Activated CD4-positive, alpha-beta T cell treated with anti-CD3 and anti-CD28 coated beads for 36 hours (primary cell): ENCODE measurements at regions of chr3 and their contacts with region 1.

Region 1: DNA sequence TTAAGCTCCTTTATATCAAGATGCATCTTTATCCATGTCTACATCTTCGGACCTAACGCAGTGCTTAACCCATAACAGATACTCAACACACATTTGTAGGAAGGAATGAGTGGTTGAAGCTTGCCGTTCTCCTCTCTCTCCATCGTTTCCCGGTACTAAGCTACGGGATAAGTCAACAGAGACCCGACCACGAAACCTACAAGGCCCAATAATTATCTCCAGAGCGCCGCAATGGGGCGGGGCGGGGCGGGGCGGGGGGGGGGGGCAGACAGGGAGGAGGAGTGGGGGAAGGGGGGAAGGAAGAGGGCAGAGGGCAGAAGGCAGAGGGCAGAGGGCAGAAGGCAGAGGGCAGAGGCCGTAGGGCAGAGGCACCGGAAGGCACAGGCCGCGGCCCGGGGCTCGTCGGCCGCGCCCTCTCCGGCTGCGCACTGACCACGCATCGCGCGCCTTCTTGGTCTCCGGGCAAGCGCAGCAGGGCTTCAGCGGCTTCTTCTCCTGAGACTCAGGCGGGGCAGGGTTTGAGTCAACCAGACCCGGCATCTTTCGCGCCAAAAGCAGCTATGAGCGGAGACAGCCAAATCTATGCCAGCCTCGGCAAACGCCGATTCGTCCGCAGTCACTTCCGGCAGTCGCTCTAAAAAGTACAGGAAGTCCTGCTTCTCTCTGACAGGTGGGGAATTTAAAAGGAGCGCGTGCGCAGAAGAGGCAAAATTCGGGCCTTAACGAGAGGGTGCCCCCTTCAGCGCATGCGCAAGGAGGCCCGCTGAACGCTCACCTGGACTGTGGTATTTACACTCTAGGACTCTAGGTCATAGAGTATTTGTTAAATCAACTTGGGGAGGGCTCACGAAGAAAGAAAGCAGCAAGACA is at the start of gene COX17:
- DNase-seq: peak; percentile 97
- ATAC-seq: peak; percentile 91
- H3K4me3 Mint-ChIP-seq: peak within 1 kb of the TSS; percentile 95
- H3K27ac Mint-ChIP-seq: peak within 1 kb of the TSS; percentile 97
- H3K4me1 Mint-ChIP-seq: peaks cover 36% of the 10 kb centered on the region
- H3K27me3 Mint-ChIP-seq: no peaks in the 10 kb centered on the region
- total RNA-seq, gene COX17: 69.5 to 82.8 TPM

Region 2: DNA sequence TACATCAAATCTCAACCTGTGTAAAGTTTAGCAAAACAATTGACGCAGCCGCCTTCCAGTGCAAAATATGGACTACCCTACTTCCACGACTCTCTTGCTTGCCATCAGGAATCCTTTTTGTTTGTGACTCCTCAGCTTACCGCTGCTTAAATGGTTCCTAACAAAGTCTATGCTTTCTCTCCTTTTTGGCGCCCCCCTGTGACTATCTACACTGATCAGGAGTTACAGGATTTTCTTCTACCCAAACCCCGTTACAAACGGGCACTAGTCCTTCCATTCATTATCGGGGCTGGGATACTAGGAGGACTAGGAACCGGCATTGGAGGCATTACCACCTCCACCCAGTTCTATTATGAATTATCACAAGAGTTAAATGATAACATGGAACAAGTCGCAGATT is 826.3 kb before region 1 on chr3:
- CTCF ChIA-PET with region 1: no interaction called
- POLR2A ChIA-PET with region 1: no interaction called
- intact Hi-C with region 1: no loop called
- DNase-seq: no peak
- ATAC-seq: no peak
- H3K4me3 Mint-ChIP-seq: no peak overlapping the region
- H3K27ac Mint-ChIP-seq: no peak overlapping the region
- H3K4me1 Mint-ChIP-seq: peaks cover 11% of the 10 kb centered on the region
- H3K27me3 Mint-ChIP-seq: peaks cover 6% of the 10 kb centered on the region

Region 3: GRCh38 chr3:118884748-118885206 is 792.2 kb before region 1 on chr3:
- CTCF ChIA-PET with region 1: interaction called, 7 read pairs
- POLR2A ChIA-PET with region 1: no interaction called
- intact Hi-C with region 1: loop called (anchors 1 to 10 kb)
- DNase-seq: peak; percentile 89
- ATAC-seq: peak; percentile 89
- H3K4me3 Mint-ChIP-seq: no peak overlapping the region
- H3K27ac Mint-ChIP-seq: no peak overlapping the region
- H3K4me1 Mint-ChIP-seq: peaks cover 3% of the 10 kb centered on the region
- H3K27me3 Mint-ChIP-seq: peaks cover 17% of the 10 kb centered on the region

Region 4: GRCh38 chr3:119279101-119279554 is 397.9 kb before region 1 on chr3:
- CTCF ChIA-PET with region 1: no interaction called
- POLR2A ChIA-PET with region 1: no interaction called
- intact Hi-C with region 1: loop called (anchors 1 to 10 kb)
- DNase-seq: no peak
- ATAC-seq: no peak
- H3K4me3 Mint-ChIP-seq: no peak overlapping the region
- H3K27ac Mint-ChIP-seq: no peak overlapping the region
- H3K4me1 Mint-ChIP-seq: peaks cover 14% of the 10 kb centered on the region
- H3K27me3 Mint-ChIP-seq: no peaks in the 10 kb centered on the region

Region 5: DNA sequence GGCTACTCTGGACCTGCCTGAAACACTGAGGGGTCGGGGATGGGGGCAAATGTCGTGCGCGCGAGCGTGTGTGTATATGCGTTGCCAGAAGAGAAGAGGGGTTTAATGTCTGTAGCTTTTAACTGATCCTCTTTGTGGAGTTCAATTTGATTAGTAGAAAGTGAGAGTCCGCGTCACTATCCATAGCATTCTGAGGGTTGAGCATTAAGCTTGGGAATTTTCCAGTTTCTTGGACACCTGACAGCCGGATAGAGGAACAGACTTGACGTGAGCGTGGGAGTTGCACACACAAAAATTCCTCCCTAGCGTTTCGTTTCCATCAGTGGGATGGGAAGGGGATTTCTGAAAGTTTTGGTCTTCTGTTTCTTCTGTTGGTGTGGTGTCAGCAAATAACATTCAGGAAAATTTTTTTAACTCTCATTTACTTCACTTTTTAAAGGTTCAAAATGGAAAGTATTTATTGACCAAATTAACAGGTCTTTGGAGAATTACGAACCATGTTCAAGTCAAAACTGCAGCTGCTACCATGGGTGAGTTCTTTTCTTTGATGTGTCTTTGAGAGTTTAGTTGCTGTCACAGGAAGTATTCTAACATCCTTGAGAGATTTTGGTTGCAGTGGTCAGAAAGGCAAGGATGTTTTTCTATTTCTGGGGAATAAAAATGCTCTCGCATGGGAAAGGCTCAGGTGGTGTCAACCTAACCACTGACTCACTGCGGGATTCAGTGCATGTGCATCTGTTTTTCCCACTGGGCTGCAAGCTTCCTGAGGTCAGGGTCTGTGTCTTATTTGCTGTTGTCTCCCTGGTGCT is 207.4 kb before region 1 on chr3:
- CTCF ChIA-PET with region 1: interaction called, 5 read pairs
- POLR2A ChIA-PET with region 1: interaction called, 10 read pairs
- intact Hi-C with region 1: loop called (anchors 1 kb)
- DNase-seq: no peak
- ATAC-seq: peak; percentile 47
- H3K4me3 Mint-ChIP-seq: peak overlapping the region; percentile 83
- H3K27ac Mint-ChIP-seq: peak overlapping the region; percentile 90
- H3K4me1 Mint-ChIP-seq: peaks cover 35% of the 10 kb centered on the region
- H3K27me3 Mint-ChIP-seq: no peaks in the 10 kb centered on the region

Region 6: GRCh38 chr3:119600732-119601131 is 76.3 kb before region 1 on chr3:
- CTCF ChIA-PET with region 1: interaction called, 4 read pairs
- POLR2A ChIA-PET with region 1: no interaction called
- intact Hi-C with region 1: loop called in 1 of 2 experiments (anchors 2 kb)
- DNase-seq: peak; percentile 65
- ATAC-seq: peak; percentile 80
- H3K4me3 Mint-ChIP-seq: no peak overlapping the region
- H3K27ac Mint-ChIP-seq: no peak overlapping the region
- H3K4me1 Mint-ChIP-seq: peaks cover 8% of the 10 kb centered on the region
- H3K27me3 Mint-ChIP-seq: no peaks in the 10 kb centered on the region

Region 7: DNA sequence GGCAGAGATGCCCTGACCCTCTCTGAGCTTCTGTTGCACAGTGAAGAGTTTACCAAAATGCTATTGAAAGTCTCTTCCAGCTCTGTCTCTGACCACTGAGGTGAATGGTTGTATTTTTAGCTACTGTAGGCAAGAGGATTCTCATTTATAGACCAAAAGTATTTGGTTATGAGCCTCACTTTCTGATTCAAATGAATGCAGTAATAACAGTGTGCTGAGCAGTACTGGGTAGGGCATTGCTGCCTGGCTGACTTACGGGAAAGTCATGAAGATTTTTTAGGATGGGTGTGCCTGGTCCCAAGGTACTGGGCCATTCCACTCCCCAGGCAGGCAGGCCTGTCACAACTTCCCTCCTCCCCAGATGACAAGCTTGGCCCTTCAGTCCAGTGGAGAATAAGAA is 63.8 kb before region 1 on chr3:
- CTCF ChIA-PET with region 1: no interaction called
- POLR2A ChIA-PET with region 1: no interaction called
- intact Hi-C with region 1: no loop called
- DNase-seq: no peak
- ATAC-seq: no peak
- H3K4me3 Mint-ChIP-seq: no peak overlapping the region
- H3K27ac Mint-ChIP-seq: no peak overlapping the region
- H3K4me1 Mint-ChIP-seq: no peaks in the 10 kb centered on the region
- H3K27me3 Mint-ChIP-seq: peaks cover 4% of the 10 kb centered on the region

Region 8: DNA sequence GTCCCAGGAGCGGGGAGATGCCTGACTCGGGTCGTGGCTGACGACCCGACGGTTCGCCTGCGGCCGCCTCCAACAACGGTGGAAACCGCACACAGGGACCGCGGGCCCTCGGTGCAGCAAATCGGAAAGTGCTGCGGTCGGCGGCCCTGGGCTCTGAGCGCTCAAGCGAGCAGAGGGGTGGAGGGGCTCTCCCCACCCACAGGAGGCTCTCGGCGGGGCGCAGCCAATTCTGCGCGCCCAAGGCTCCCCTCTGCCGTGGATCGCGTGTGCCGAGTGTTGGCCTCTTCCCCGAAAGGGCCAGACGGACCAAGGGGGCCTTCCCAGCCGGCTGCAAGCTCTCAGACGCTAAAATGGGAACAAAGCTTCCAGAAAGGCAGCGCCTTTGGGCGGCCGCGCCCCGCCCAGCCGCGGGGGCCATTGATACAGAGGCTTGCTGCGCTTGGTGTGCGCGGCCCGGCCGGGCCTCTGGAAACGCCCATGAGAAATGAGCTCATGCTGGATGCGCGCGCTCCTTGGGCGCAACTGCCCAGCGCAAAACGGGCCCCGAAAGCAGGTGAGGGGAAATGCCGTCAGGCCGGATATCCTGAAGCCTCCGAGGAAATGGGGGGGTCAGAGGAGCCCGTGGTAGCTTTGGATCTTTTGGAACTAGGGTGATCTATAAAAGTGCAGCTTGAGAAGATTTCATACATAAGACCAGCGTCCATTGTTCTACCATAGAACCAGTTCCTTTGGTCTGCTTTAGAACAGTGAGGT is 418.4 kb after region 1 on chr3:
- CTCF ChIA-PET with region 1: no interaction called
- POLR2A ChIA-PET with region 1: interaction called, 3 read pairs
- intact Hi-C with region 1: loop called (anchors 1 kb)
- DNase-seq: peak; percentile 94
- ATAC-seq: peak; percentile 35
- H3K4me3 Mint-ChIP-seq: no peak overlapping the region
- H3K27ac Mint-ChIP-seq: no peak overlapping the region
- H3K4me1 Mint-ChIP-seq: peaks cover 17% of the 10 kb centered on the region
- H3K27me3 Mint-ChIP-seq: no peaks in the 10 kb centered on the region